ENCODE measurements at regions of chr1 and their contacts with region 1.

Region 1: GRCh38 chr1:202144402-202145067 is at the start of gene ARL8A:
- DNase-seq: peak; percentile 45 to 82 (median 66)
- ATAC-seq: peak; percentile 71 to 84
- H3K4me3 Mint-ChIP-seq: peak within 1 kb of the TSS; percentile 91 to 99 (median 94)
- H3K27ac Mint-ChIP-seq: peak within 1 kb of the TSS; percentile 86 to 97 (median 94)
- H3K4me1 Mint-ChIP-seq: peaks cover 12 to 51% (median 35%) of the 10 kb centered on the region in 4 donors
- H3K27me3 Mint-ChIP-seq: no peaks in the 10 kb centered on the region
- polyA plus RNA-seq, gene ARL8A: 4.9 to 6.4 (median 5.6) TPM

Region 2: GRCh38 chr1:202056644-202057461 is 87.7 kb before region 1 on chr1:
- POLR2A ChIA-PET with region 1: no interaction called
- DNase-seq: no peak
- ATAC-seq: no peak
- H3K4me3 Mint-ChIP-seq: no peak overlapping the region
- H3K27ac Mint-ChIP-seq: no peak overlapping the region
- H3K4me1 Mint-ChIP-seq: no peaks in the 10 kb centered on the region
- H3K27me3 Mint-ChIP-seq: peaks cover 0 to 15% (median 4%) of the 10 kb centered on the region in 5 donors

Region 3: DNA sequence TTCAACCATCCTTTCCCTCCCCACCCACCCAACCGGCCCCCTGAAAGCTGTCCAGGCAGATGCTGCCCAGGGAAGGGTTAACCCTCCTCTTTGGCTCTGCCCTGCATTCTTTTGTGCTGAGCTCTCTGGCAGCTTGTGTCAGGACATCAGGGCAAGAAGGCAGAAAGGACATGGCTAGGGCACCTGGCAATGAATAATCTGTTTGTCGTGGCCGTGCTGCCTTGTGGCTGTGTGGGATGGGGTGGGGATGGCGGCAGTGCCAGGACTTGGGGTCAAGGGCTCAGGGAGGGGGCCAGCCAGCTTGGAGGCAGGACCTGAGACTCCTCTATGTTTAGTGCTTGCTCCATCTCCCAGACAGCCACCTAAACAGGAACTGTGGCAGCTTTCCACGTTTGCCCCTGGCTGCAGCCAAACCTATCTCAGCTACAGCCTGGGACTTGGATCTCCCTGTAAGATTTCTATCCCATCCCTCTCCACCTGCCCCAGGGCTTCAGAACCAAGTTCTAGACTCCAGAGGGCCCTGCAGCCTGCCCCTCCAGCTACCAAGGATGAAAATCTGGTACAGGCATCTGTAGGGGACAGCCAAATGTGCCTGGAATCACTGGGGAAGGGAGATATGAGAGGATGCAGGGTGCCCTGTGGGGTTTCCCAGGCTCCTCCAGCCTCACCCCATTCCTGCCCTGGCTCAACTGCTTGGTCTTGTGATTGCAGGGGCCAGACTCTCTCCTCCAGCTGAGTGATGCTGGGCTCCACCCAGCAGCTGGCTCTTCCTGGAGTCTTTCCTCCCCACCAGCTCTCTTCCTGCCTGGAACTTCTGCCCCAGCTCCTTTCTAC is 31.5 kb before region 1 on chr1:
- POLR2A ChIA-PET with region 1: no interaction called
- DNase-seq: no peak
- ATAC-seq: no peak
- H3K4me3 Mint-ChIP-seq: no peak overlapping the region
- H3K27ac Mint-ChIP-seq: peak overlapping the region in 2 of 10 donors; percentile 1 to 25
- H3K4me1 Mint-ChIP-seq: no peaks in the 10 kb centered on the region
- H3K27me3 Mint-ChIP-seq: peaks cover 0 to 4% (median 0%) of the 10 kb centered on the region in 5 donors

Region 4: GRCh38 chr1:202160377-202160940 is 15.9 kb after region 1 on chr1 and contains the start of gene PTPN7:
- POLR2A ChIA-PET with region 1: interaction called, 55 read pairs
- DNase-seq: peak; percentile 67 to 88 (median 82)
- ATAC-seq: peak; percentile 76 to 78
- H3K4me3 Mint-ChIP-seq: peak within 1 kb of the TSS; percentile 93 to 100 (median 98)
- H3K27ac Mint-ChIP-seq: peak within 1 kb of the TSS; percentile 96 to 99 (median 98)
- H3K4me1 Mint-ChIP-seq: peaks cover 47 to 87% (median 84%) of the 10 kb centered on the region in 4 donors
- H3K27me3 Mint-ChIP-seq: no peaks in the 10 kb centered on the region
- polyA plus RNA-seq, gene PTPN7: 37.7 to 44.4 (median 39.1) TPM